Tibial artery (tissue), 4 donors: ENCODE measurements at regions of chr10 and their contacts with region 1.

Region 1: DNA sequence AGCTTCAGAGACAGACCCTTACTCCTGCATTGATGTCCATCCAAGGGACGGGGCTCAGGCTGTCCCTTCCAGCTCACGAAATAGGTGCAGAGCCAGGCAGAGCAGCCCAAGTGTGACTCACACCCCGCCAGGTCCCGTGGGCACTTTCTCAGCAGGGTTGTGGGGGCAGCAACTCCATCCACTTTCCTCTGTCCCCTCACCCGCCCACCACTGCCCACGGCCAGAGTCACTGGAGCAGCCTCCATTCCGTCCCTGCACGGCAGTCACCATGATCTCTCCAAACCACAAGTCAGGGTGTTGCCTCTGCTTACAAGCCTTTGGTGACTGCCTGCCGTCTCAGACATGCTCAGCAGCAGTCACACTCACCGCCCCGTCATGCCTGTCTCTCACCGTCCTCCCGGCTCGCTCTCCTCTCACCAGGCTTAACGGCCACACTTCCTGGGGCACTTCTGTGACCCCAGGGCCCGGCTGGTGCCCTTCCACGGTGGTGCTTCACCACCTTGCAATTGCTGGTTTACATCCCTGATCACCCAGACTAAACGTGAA is 39.3 kb downstream of the CALML3 start:
- DNase-seq: peak in 1 of 2 donors; percentile 76
- H3K4me3 ChIP-seq: no peak overlapping the region
- H3K27ac ChIP-seq: peak overlapping the region; percentile 75
- H3K4me1 ChIP-seq: peaks cover 6 to 51% (median 41%) of the 10 kb centered on the region in 4 donors
- H3K27me3 ChIP-seq: no peaks in the 10 kb centered on the region
- CTCF ChIP-seq: no peak

Region 2: GRCh38 chr10:5601826-5602495 is 37.9 kb after region 1 on chr10:
- intact Hi-C with region 1: loop called (anchors 5 kb)
- DNase-seq: no peak
- H3K4me3 ChIP-seq: no peak overlapping the region
- H3K27ac ChIP-seq: peak overlapping the region; percentile 76 to 77
- H3K4me1 ChIP-seq: peaks cover 5 to 87% (median 58%) of the 10 kb centered on the region in 4 donors
- H3K27me3 ChIP-seq: no peaks in the 10 kb centered on the region
- CTCF ChIP-seq: no peak